SK-N-SH (cell line): ENCODE measurements at regions of chr3 and their contacts with region 1.

Region 1: DNA sequence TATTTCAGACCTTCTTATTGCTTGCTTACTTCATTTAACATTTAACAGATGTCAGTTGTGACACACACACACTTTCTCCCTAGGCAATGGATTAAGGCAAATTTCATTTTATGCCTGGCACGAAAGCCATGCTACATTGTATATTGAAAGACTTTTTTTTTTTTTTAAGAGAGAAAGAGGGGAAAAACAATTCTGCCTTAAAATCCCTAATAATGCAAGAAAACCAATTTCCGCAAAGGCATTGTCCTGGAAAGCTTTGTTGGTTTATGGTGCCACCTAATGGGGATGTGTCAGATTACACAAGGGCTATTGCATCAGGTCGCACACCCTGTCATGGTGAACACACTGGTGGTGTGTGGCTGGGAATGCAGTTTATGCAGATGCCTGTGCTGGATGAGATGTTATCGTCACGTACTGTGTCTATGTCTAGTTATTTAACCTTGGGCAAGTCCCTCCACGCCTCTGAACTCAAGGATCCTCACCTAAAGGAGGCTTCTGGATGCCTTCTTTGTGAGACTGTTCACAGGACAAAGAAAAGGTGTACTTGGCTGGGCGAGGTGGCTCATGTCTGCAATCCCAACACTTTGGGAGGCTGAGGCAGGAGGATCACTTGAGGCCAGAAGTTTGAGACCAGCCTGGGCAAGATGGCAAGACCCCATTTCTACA is 37.3 kb upstream of the RFTN1 start:
- DNase-seq: peak; percentile 73
- H3K4me3 ChIP-seq: peak overlapping the region in 1 of 2 experiments; percentile 18; a peak in 1 of 4 replicates
- H3K27ac ChIP-seq: peak overlapping the region in 1 of 2 experiments; percentile 90; a peak in 2 of 4 replicates
- H3K4me1 ChIP-seq: peaks cover 0 to 7% of the 10 kb centered on the region in 2 experiments; a peak in 2 of 4 replicates
- H3K27me3 ChIP-seq: no peaks in the 10 kb centered on the region
- CTCF ChIP-seq: peak; percentile 85
- EP300 ChIP-seq: 0 out of 4 replicates have a peak, but pooled peaks of 1 of the 2 experiments have one; percentile 5
- RAD21 ChIP-seq: peak; percentile 98

Region 2: DNA sequence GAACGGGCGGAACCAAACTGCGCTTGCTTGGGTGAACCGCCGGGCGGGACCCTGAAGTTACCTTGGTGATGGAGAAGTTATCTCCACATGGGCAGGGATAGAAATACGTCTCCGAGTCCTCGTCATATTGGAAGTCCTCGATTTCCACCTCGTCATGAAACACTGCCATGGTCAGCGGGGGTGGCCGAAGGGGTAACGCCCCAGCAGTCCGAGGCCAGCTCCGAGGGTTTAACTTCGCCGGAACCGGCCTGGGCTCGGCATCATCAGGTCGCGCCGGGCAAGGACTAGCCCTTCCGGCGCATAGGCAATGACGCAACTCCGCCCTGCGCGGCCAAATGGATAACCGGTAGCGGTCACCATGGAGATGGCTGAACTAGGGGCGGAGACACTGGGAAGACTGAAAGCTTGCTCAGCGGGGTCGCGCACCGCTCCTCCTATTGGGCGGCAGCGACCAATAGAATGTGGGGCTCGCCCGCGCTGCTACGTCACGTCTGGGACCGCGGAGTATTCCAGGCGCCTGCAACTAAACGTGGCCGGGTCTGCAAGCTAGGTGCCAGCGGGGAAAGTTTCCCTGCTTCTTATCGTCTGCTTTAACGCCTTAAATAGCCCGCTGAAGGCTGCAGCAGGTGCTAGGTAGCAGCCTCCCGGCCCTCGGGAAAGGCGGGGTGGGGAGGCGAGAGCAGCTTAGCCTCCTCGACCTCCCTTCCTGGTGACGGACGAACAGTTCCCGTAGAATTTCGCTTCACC is 285.9 kb before region 1 on chr3 and contains the starts of genes DPH3 and OXNAD1:
- CTCF ChIA-PET with region 1: interaction called, 25 read pairs
- POLR2A ChIA-PET with region 1: no interaction called
- DNase-seq: peak; percentile 93
- H3K4me3 ChIP-seq: peak within 1 kb of the TSS; percentile 83 to 86
- H3K27ac ChIP-seq: peak within 1 kb of the TSS; percentile 83 to 86
- H3K4me1 ChIP-seq: peaks cover 5 to 17% of the 10 kb centered on the region in 2 experiments
- H3K27me3 ChIP-seq: no peaks in the 10 kb centered on the region
- CTCF ChIP-seq: no peak
- EP300 ChIP-seq: no peak
- RAD21 ChIP-seq: no peak
- polyA plus RNA-seq, gene DPH3: 8.5 and 10.8 TPM in 2 replicates
- polyA plus RNA-seq, gene OXNAD1: 6.9 and 10.0 TPM in 2 replicates

Region 3: GRCh38 chr3:16511681-16512434 is 39.0 kb before region 1 on chr3:
- CTCF ChIA-PET with region 1: interaction called, 25 read pairs
- POLR2A ChIA-PET with region 1: interaction called, 13 read pairs
- DNase-seq: no peak
- H3K4me3 ChIP-seq: peak overlapping the region; percentile 86 to 96
- H3K27ac ChIP-seq: peak overlapping the region; percentile 67 to 100
- H3K4me1 ChIP-seq: peaks cover 9 to 58% of the 10 kb centered on the region in 2 experiments; a peak in 3 of 4 replicates
- H3K27me3 ChIP-seq: no peaks in the 10 kb centered on the region
- CTCF ChIP-seq: peak; percentile 12; the same call in 1 of the 2 replicates
- EP300 ChIP-seq: no peak
- RAD21 ChIP-seq: no peak; the same call in 1 of the 2 replicates

Region 4: DNA sequence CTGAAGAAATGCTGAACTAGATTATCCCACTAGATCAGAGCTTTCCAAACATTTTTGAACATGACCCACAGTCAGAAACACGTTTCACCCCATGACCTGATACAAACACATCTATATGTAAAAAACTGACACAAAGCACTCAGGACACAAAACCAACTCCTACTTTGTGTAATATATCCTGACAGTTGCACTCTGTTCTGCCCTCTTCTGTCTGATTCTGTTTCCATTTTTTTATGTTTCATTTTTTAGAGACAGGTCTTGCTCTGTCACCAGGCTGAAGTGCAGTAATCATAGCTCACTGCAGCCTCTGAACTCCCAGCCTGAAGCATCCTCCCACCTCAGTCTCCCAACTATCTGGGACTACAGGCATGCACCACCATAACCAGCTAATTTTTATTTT is 21.5 kb before region 1 on chr3:
- CTCF ChIA-PET with region 1: interaction called, 23 read pairs
- POLR2A ChIA-PET with region 1: no interaction called
- DNase-seq: no peak
- H3K4me3 ChIP-seq: no peak overlapping the region
- H3K27ac ChIP-seq: no peak overlapping the region
- H3K4me1 ChIP-seq: peaks cover 0 to 6% of the 10 kb centered on the region in 2 experiments; a peak in 2 of 4 replicates
- H3K27me3 ChIP-seq: no peaks in the 10 kb centered on the region; the same call in 1 of the 2 replicates
- CTCF ChIP-seq: peak; percentile 20
- EP300 ChIP-seq: no peak
- RAD21 ChIP-seq: no peak